ENCODE measurements at regions of chr12 and their contacts with region 1.

Region 1: DNA sequence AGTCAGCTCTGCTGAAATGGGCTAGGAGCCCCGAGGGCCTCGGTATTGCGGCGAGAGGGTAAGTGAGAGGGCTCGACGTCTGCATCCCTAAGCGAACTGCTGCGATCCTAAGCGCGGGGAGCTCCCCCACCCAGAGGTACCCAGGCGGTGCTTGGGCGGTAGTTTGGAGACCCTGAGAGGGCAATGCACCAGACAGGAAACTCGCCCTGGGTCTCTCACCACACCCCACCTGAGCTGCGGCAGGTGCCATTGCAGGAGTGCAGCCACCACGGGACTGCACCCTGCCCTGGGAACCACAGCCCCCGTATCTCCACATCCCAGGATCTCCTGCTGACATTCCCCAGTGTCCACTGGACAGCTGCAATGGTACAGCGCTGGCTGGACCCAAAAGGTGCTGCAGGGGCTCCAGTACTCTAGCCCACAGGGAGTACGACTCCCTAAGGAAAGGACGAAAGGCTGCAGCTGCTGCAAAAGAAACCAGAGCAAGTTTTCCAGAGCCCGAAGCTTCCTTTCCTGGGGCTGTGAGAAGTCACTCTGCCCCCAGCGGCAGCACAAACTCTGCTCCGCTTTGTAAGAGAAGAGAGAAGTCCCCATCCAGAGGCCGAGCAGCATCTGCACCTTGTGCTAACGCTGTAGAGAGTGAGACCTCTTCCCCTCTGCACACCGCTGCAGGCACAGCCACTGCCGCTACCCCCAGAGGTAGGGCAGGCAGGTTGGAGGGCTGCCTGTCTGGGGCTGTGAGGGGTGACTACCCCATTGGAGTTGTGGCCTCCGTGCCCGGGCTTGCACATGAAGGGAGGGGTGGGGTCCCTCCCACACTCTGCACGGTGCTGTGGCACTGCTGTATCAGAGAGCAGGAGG is 31.1 kb upstream of the MON2 start:
- DNase-seq: peak; percentile 28 to 41 (median 41)
- H3K4me3 ChIP-seq: peak overlapping the region; percentile 40 to 72 (median 46)
- H3K4me3 Mint-ChIP-seq: peak overlapping the region; percentile 87 to 95
- H3K27ac ChIP-seq: no peak overlapping the region
- H3K27ac Mint-ChIP-seq: peak overlapping the region in 2 of 7 donors; percentile 5 to 33
- H3K4me1 ChIP-seq: peaks cover 17% of the 10 kb centered on the region in 2 donors
- H3K4me1 Mint-ChIP-seq: peaks cover 18% of the 10 kb centered on the region
- H3K27me3 ChIP-seq: no peaks in the 10 kb centered on the region
- H3K27me3 Mint-ChIP-seq: peaks cover 8 to 23% (median 13%) of the 10 kb centered on the region in 3 donors
- CTCF ChIP-seq: peak; percentile 56

Region 2: DNA sequence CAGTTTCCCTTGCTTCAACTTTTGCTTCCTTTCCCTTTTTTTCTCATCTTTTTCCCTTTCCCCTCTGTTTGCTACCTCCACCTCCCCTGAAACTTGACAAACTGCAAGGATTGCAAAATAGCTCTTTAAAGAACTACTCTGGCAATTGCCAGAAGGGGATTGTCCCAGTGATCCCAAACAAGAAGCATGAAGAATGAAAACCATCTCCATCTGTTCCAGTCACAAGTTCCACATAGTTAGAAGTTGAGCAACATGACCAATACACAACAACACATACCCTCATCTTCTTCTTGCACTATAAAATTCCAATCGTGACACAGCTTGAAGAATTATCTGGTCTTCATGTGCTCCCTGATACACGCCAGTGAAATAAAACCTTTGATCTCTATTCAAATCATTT is 269.0 kb before region 1 on chr12:
- intact Hi-C with region 1: no loop called
- DNase-seq: no peak
- H3K4me3 ChIP-seq: no peak overlapping the region
- H3K4me3 Mint-ChIP-seq: no peak overlapping the region
- H3K27ac ChIP-seq: no peak overlapping the region
- H3K27ac Mint-ChIP-seq: no peak overlapping the region
- H3K4me1 ChIP-seq: no peaks in the 10 kb centered on the region
- H3K4me1 Mint-ChIP-seq: peaks cover 7% of the 10 kb centered on the region
- H3K27me3 ChIP-seq: no peaks in the 10 kb centered on the region
- H3K27me3 Mint-ChIP-seq: peaks cover 0 to 2% (median 0%) of the 10 kb centered on the region in 3 donors
- CTCF ChIP-seq: no peak

Region 3: DNA sequence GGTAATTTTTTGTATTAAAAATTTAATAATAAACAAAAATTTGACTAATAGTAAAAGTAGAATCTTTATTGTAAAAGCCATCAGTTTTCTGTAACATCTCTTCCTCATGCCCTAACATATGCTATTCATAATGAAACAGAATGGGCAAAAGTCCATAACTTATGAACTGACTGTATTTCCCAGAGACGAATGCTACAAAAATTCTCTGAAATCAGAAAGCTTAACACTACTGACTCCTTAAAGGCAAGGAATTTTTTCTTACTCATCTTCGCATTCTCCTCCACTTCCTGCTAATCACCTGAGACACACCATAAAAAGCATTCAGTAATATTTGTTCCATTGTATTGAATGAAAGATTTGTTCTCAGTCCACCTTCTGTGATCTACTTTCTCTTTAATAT is 48.7 kb after region 1 on chr12:
- intact Hi-C with region 1: no loop called
- DNase-seq: no peak
- H3K4me3 ChIP-seq: no peak overlapping the region
- H3K4me3 Mint-ChIP-seq: no peak overlapping the region
- H3K27ac ChIP-seq: no peak overlapping the region
- H3K27ac Mint-ChIP-seq: no peak overlapping the region
- H3K4me1 ChIP-seq: no peaks in the 10 kb centered on the region
- H3K4me1 Mint-ChIP-seq: no peaks in the 10 kb centered on the region
- H3K27me3 ChIP-seq: no peaks in the 10 kb centered on the region
- H3K27me3 Mint-ChIP-seq: no peaks in the 10 kb centered on the region
- CTCF ChIP-seq: no peak

Region 4: GRCh38 chr12:62799126-62799736 is 363.7 kb after region 1 on chr12:
- intact Hi-C with region 1: loop called in 1 of 2 experiments (anchors 10 kb)
- DNase-seq: peak; percentile 33 to 69 (median 61)
- H3K4me3 ChIP-seq: no peak overlapping the region
- H3K4me3 Mint-ChIP-seq: no peak overlapping the region
- H3K27ac ChIP-seq: no peak overlapping the region
- H3K27ac Mint-ChIP-seq: peak overlapping the region in 1 of 7 donors; percentile 20
- H3K4me1 ChIP-seq: peaks cover 0 to under 1% of the 10 kb centered on the region in 2 donors
- H3K4me1 Mint-ChIP-seq: no peaks in the 10 kb centered on the region
- H3K27me3 ChIP-seq: no peaks in the 10 kb centered on the region
- H3K27me3 Mint-ChIP-seq: peaks cover 0 to 2% (median 1%) of the 10 kb centered on the region in 3 donors
- CTCF ChIP-seq: peak; percentile 96